Psoas muscle (tissue), 8 donors: ENCODE measurements at regions of chr17 and their contacts with region 1.

Region 1: DNA sequence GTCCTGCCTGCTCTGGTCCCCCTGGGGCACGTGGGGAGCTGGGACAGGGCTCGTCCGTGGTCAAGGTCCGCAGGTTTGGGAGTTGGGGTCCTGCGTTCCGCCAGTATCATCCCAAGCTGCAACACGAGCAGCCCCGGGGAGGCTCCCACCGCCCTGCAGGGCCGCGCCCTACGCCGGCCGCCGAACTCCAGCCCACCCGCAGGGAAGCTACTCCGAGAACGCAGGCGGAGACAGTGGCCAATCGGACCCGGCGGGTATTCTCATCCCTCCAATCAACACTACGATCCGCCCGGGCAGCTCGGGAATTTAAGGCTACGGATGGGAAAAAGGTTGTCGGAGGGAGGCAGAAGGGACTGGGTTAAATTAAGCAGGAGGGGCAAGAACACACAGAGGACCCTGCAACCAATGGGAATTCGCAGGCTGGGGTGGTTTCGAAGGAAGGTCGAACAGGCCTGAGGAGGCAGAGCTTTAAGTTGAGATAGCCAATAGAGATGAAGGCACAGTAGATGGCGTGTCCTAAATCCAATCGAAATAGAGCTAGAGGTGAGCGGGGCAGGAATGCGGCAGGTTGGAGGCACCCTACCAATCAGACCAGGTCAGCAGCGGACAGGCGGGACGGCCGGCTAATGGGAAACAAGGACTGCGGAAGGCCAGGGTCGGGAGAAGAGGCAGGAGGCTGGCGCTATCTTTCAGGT is 626 bp downstream of the SPAG7 start:
- DNase-seq: peak; percentile 97 to 99
- ATAC-seq: peak; percentile 86 to 89 (median 88)
- H3K4me3 ChIP-seq: peak overlapping the region; percentile 84
- H3K27ac ChIP-seq: peak overlapping the region; percentile 93
- H3K4me1 ChIP-seq: peaks cover 26% of the 10 kb centered on the region
- H3K27me3 ChIP-seq: no peaks in the 10 kb centered on the region
- CTCF ChIP-seq: no peak

Region 2: GRCh38 chr17:4509401-4509800 is 457.6 kb before region 1 on chr17:
- intact Hi-C with region 1: no loop called
- DNase-seq: no peak
- ATAC-seq: peak in 1 of 4 donors; percentile 28
- H3K4me3 ChIP-seq: no peak overlapping the region
- H3K27ac ChIP-seq: no peak overlapping the region
- H3K4me1 ChIP-seq: peaks cover 7% of the 10 kb centered on the region
- H3K27me3 ChIP-seq: peaks cover 0 to 4% (median 0%) of the 10 kb centered on the region in 3 donors
- CTCF ChIP-seq: no peak

Region 3: GRCh38 chr17:4948931-4949320 is 18.1 kb before region 1 on chr17:
- intact Hi-C with region 1: loop called (anchors 1 to 2 kb)
- DNase-seq: peak; percentile 89 to 92
- ATAC-seq: peak; percentile 65 to 71 (median 70)
- H3K4me3 ChIP-seq: peak overlapping the region; percentile 97
- H3K27ac ChIP-seq: peak overlapping the region; percentile 96
- H3K4me1 ChIP-seq: peaks cover 41% of the 10 kb centered on the region
- H3K27me3 ChIP-seq: no peaks in the 10 kb centered on the region
- CTCF ChIP-seq: no peak

Region 4: DNA sequence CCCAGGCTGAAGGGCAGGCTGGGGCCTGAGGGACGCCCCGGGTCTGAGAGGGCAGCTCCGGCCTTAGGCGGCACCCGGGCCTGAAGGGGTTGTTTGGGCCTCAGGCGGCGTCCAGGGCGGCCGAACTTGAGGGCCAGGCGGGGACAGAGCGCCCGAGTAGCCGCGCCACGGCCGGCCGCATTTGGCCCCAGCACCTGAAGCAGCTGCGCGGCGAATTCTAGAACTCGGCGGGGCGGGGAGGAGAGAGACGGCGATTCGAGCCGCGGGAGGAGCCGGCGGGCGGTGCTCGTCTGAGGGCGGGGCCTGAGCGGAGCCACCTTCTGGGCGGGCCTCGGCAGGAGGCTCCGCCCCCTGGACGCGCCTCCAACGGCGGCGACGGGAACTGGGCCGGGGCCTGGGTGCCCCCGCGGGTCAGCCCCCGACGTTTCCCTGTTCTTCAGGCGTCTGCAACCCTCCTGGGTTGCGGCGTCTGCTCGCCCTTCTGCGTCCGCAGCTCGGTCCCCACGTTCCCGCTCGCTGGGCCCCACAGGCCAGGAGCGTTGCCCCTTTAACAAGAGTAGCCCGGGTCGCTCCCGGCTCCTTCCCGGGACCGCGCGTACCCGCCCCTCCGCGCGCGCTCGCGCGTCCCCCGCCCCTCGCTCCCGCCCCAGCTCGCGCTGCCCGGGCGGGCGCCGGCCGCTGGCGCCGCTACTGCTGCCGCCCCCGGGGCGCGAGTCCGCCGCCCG is 30.5 kb after region 1 on chr17 and contains the starts of genes INCA1 and KIF1C:
- intact Hi-C with region 1: no loop called
- DNase-seq: peak; percentile 95 to 98
- ATAC-seq: peak; percentile 83 to 85 (median 84)
- H3K4me3 ChIP-seq: peak within 1 kb of the TSS; percentile 96
- H3K27ac ChIP-seq: peak within 1 kb of the TSS; percentile 96
- H3K4me1 ChIP-seq: peaks cover 34% of the 10 kb centered on the region
- H3K27me3 ChIP-seq: no peaks in the 10 kb centered on the region
- CTCF ChIP-seq: peak; percentile 17
- total RNA-seq, gene INCA1: 2.9 to 4.9 (median 3.5) TPM
- total RNA-seq, gene KIF1C: 624 to 1,039 (median 691) TPM